ENCODE measurements at regions of chr1 and their contacts with region 1.

Region 1: GRCh38 chr1:83998498-83999315 is at the start of gene TTLL7:
- DNase-seq: peak; percentile 78 to 96 (median 92)

Region 2: DNA sequence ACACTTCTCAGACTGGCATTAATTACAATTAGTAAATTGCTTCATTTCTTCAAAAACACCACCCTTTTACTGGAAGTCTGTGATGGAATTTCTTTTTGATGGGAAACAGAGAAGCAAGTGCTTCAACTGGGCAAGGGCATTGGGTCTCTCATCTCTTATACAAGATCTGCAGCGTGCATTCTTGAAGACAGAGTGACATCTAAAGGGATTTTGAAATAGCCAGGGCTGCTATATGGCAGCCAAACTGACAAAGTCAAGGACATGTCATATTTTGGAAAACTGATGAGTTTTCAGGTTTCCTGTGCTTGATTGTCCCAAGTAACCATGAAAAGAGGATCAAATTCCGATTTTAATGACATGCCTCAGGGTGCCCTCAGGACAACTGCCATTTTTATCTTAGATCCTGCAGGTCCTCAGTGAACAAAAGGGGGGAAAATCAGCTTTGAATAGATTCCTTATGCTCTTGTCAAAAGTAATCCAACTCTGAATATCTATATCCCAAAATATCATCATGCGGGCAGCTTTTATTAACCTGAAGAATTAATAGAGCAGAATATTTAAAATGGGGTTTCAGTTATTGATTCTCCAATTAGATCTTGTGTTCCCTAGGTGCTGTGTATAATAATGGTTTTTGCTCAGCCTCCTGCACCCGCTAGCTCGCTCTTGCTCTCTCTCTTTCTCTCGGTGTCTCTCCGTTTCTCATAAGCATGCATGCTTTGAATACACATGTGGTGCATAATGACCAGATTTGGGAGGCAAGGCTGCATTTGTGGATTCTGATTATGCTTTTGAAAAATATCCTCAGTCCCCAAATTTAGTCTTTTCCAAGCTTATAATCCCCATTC is 221.6 kb before region 1 on chr1:
- intact Hi-C with region 1: no loop called
- DNase-seq: no peak

Region 3: DNA sequence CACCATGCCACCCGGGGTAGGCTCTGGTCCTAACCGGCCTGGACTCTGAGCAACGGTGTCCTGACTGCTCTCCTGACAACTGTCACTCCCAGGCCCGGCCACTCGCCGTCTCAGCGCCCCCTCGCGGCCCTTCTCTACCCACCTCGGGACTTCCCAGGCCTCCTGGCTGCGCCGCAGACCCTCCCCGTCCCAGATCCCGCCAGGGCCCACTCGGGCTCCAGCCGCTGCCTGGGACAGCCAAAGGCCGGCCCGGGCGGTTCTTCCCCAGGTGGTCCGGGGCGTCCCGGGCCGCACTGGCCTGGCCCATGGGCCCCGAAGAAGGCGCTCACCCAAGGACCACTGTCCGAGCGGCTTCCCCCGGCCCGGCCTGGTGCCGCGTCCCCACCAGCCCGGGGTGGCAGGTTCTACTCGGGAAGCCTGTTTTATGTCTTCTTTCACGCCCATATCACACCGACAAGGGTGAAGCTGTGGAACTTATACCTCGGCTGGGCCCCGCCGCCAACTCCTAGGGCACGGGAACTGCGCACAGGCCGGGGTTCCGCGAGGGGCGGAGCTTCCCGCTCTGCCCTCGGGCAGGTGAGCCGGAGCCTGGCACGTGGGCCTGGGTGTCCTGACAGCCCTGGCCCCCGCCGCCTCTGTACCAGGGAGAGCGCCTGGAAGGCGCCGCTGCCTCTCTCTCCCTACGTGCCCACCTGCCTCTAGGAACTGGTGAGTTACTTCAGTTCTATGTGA is 138.1 kb before region 1 on chr1:
- intact Hi-C with region 1: no loop called
- DNase-seq: peak; percentile 66 to 94 (median 86)

Region 4: DNA sequence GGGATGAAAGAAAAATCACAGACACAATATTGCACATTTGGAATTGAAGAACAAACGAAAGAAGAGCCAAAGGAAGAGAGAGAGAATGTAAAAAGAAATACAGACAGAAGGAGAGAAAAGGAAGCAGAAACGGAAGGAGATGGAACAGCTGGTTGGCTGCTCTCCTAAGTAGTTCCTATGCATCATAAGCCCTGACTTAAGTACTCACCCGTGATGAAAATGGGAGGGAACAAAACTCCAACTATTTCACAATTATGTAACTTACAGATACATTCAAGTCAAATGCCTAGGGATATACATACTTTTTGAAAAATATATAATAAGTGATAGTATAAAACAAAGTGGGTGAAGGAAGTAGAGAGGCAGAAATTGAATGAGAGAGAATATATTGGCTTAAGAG is 88.2 kb before region 1 on chr1:
- intact Hi-C with region 1: no loop called
- DNase-seq: no peak

Region 5: DNA sequence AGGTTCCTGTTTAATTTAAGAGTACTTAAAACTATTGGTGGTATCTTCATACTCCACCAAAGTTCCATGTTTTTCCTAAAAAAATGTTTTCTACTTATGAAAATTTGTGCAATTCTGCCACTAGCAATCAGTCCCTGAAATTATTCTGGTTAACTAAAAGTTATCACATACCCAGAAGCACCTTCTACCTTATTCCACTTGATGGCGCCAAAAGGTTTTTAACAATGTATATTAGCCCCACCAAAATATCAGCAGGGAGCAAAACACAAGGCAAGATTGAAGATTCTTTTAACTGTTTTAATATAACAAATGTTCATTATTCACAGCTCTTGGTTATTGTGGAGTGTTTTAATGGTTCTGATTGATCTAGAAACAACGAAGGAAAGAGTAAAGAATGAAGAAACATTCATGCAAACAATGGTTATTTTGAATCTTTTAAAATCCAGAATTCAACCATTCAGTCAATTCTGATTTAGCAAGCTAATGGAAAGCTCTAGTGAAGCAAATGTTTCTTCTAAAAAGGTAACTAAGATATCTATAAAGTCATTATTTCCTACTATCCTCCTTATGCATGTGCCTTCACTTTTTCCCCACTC is 67.0 kb before region 1 on chr1:
- intact Hi-C with region 1: loop called (anchors 10 kb)
- DNase-seq: peak in 12 of 42 donors; percentile 29 to 78 (median 51)

Region 6: GRCh38 chr1:83959824-83960498 is 38.7 kb before region 1 on chr1:
- intact Hi-C with region 1: loop called (anchors 5 kb)
- DNase-seq: no peak

Region 7: GRCh38 chr1:84122780-84123382 is 124.2 kb after region 1 on chr1:
- intact Hi-C with region 1: loop called (anchors 10 kb)
- DNase-seq: peak; percentile 7 to 89 (median 70)

Measured in head of caudate nucleus (tissue), 42 donors.